ENCODE measurements at regions of chr5 and their contacts with region 1.

Region 1: DNA sequence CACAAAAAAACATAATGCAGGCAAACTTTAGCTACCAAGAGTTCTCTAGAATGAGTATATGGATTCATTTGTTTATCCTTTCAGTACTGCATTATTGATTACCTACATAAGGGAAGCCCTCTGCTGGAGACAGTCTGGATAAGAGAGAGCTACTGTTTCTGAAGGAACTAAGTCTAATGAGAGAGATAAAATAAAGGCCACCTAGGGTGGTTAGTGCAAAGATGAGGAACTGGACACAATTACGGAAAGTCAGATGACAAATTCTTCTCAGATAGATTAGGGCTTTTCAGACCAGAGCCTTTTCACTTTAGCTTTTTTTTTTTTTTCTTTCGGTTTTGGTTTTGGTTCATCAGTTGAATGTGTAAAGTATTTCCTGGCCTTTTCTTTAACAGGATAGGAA is 31.3 kb downstream of the ISOC1 start:
- DNase-seq: no peak
- ATAC-seq: no peak
- H3K4me3 ChIP-seq: no peak overlapping the region
- H3K27ac ChIP-seq: no peak overlapping the region
- H3K4me1 ChIP-seq: no peaks in the 10 kb centered on the region
- H3K27me3 ChIP-seq: no peaks in the 10 kb centered on the region

Region 2: GRCh38 chr5:128905571-128906110 is 220.2 kb before region 1 on chr5:
- intact Hi-C with region 1: loop called in 1 of 2 experiments (anchors 10 kb)
- DNase-seq: no peak
- ATAC-seq: no peak
- H3K4me3 ChIP-seq: no peak overlapping the region
- H3K27ac ChIP-seq: no peak overlapping the region
- H3K4me1 ChIP-seq: no peaks in the 10 kb centered on the region
- H3K27me3 ChIP-seq: no peaks in the 10 kb centered on the region

Measured in aorta (tissue), 5 donors.